H1 (cell line): ENCODE measurements at regions of chr3 and their contacts with region 1.

Region 1: GRCh38 chr3:102471001-102471400 is 36.2 kb downstream of the ZPLD1 start:
- DNase-seq: peak; percentile 17 to 57
- H3K4me3 ChIP-seq: no peak overlapping the region
- H3K27ac ChIP-seq: no peak overlapping the region
- H3K4me1 ChIP-seq: no peaks in the 10 kb centered on the region
- H3K27me3 ChIP-seq: no peaks in the 10 kb centered on the region
- CTCF ChIP-seq: peak; percentile 67 to 76 (median 69)
- EP300 ChIP-seq: no peak
- POLR2A ChIP-seq: no peak
- RAD21 ChIP-seq: peak; percentile 50 to 65

Region 2: GRCh38 chr3:102481050-102481449 is 10.0 kb after region 1 on chr3:
- CTCF ChIA-PET with region 1: interaction called, 32 read pairs
- POLR2A ChIA-PET with region 1: no interaction called
- DNase-seq: no peak
- H3K4me3 ChIP-seq: no peak overlapping the region
- H3K27ac ChIP-seq: no peak overlapping the region
- H3K4me1 ChIP-seq: no peaks in the 10 kb centered on the region
- H3K27me3 ChIP-seq: no peaks in the 10 kb centered on the region
- CTCF ChIP-seq: no peak
- EP300 ChIP-seq: no peak
- POLR2A ChIP-seq: no peak
- RAD21 ChIP-seq: no peak

Region 3: DNA sequence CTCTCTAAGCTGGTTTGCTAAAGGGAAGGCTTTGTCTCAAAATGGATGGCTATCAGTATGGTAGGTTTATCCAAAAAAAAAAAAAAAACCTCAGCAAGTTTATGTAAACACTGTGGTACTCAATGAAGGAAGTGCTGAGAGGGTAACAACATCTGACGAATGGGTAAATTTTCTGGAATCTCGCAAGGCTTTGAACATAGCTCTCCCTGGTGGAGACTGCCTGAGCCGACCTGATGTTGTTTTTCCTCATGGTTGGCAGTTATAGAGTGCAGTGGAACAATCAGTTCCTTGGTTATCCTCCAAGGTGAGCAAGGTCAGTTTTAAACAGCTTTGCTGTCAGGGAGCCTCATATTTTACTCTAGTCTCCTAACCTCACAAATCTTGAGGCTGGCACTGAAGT is 58.5 kb after region 1 on chr3:
- CTCF ChIA-PET with region 1: interaction called, 12 read pairs
- POLR2A ChIA-PET with region 1: no interaction called
- DNase-seq: peak in 1 of 2 experiments; percentile 7
- H3K4me3 ChIP-seq: no peak overlapping the region
- H3K27ac ChIP-seq: no peak overlapping the region
- H3K4me1 ChIP-seq: no peaks in the 10 kb centered on the region
- H3K27me3 ChIP-seq: no peaks in the 10 kb centered on the region
- CTCF ChIP-seq: peak; percentile 32 to 78 (median 68)
- EP300 ChIP-seq: no peak
- POLR2A ChIP-seq: no peak
- RAD21 ChIP-seq: peak; percentile 90 to 91

Region 4: GRCh38 chr3:102553876-102554275 is 82.9 kb after region 1 on chr3:
- CTCF ChIA-PET with region 1: no interaction called
- POLR2A ChIA-PET with region 1: no interaction called
- DNase-seq: no peak
- H3K4me3 ChIP-seq: no peak overlapping the region
- H3K27ac ChIP-seq: no peak overlapping the region
- H3K4me1 ChIP-seq: no peaks in the 10 kb centered on the region
- H3K27me3 ChIP-seq: no peaks in the 10 kb centered on the region
- CTCF ChIP-seq: no peak
- EP300 ChIP-seq: no peak
- POLR2A ChIP-seq: no peak
- RAD21 ChIP-seq: no peak

Region 5: GRCh38 chr3:102670986-102671385 is 200.0 kb after region 1 on chr3:
- CTCF ChIA-PET with region 1: no interaction called
- POLR2A ChIA-PET with region 1: no interaction called
- DNase-seq: no peak
- H3K4me3 ChIP-seq: no peak overlapping the region
- H3K27ac ChIP-seq: no peak overlapping the region
- H3K4me1 ChIP-seq: peaks cover 0 to 4% (median 2%) of the 10 kb centered on the region in 4 experiments; a peak in 4 of 7 replicates
- H3K27me3 ChIP-seq: no peaks in the 10 kb centered on the region
- CTCF ChIP-seq: no peak
- EP300 ChIP-seq: no peak
- POLR2A ChIP-seq: no peak
- RAD21 ChIP-seq: no peak